CD4-positive, alpha-beta T cell (primary cell): ENCODE measurements at regions of chr16 and their contacts with region 1.

Region 1: DNA sequence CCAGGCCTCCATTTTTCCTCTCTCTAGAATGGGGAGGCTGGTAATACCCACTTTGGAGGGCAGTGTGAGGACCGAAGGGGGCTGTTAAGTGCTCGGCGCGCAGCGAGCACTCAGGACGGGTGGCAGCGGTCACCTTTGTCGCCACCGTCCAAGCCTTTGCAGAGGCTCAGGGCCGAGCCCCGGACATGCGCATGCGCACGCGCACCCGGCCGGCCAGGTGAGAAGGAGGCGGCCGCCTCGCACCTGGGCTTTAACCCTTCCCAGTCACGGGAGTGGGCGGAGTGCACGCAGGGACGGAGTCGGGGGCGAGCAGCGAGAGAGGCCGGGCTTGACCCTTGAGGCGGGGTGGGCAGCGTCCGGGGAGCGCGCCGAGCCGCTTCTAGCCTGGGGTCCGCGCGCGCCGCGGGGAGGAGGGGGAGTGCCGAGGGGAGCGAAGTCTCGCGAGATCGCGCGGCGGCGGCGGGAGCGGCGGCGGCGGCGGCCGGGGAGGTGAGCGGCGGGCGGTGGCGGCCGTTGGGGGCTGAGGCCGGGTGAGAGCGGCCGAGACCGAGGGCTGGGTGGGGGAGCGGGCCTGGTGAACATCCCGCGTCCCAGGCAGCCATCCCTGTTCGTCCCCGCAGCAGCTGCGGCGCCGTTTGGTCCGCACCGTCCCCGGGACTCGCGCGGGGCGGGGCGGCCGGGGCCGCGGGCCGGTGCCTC is at the start of gene MRTFB:
- DNase-seq: peak; percentile 63 to 90 (median 76)
- ATAC-seq: peak; percentile 90
- H3K4me3 ChIP-seq: peak within 1 kb of the TSS; percentile 84
- H3K4me3 Mint-ChIP-seq: peak within 1 kb of the TSS; percentile 93
- H3K27ac ChIP-seq: peak within 1 kb of the TSS in 1 of 2 donors; percentile 69
- H3K27ac Mint-ChIP-seq: peak within 1 kb of the TSS; percentile 82
- H3K4me1 ChIP-seq: peaks cover 17% of the 10 kb centered on the region
- H3K4me1 Mint-ChIP-seq: peaks cover 39% of the 10 kb centered on the region
- H3K27me3 ChIP-seq: peaks cover 0 to 3% of the 10 kb centered on the region in 2 experiments
- H3K27me3 Mint-ChIP-seq: no peaks in the 10 kb centered on the region
- CTCF ChIP-seq: no peak
- total RNA-seq, gene MRTFB: 18.0 to 19.4 TPM

Region 2: DNA sequence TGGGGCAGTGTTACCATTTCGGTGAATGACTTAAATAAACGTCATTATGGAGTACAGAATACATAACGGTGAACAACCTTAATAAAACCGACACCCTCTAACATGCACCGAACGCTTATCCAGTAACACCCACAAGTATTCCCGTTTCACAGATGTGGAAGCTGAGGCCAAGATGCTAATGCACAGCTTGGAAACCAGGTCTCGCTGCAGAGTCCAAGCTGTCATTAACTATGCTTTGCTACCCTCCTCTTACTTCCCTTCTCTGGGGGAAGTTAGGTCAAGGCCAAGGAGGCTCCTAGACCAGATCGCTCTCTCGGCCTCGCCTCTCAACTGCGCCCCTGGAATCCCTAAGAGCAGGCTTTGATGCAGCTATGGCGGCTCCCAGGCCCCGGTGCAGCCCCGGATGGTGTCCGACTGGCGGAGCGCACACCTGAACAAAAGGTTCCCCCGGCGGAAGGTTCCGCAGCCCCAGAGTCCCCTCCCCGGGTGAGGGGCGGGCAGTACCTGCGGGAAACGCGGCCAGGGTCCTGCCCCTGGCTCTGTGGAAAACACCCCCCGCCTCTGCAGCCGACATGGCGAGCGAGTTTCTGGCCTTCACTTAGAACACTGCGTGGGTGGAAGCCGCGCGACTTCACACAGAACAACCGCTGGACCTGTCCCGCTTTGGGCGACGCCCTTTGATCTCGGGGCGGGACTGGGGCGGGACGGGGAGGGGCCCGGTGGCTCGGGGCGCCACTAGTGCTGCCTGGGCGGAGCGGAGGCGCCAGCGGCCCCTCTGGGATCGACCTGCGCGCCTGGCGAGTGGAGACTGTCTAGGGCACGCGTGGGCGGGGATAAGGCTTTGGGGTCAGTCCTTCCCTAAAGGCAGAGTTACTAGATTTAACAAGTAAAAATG is 1267.6 kb before region 1 on chr16 and contains the start of gene CPPED1:
- CTCF ChIA-PET with region 1: no interaction called
- POLR2A ChIA-PET with region 1: no interaction called
- intact Hi-C with region 1: loop called in 1 of 2 experiments (anchors 10 kb)
- DNase-seq: peak; percentile 82 to 95 (median 88)
- ATAC-seq: peak; percentile 95
- H3K4me3 ChIP-seq: peak within 1 kb of the TSS; percentile 83
- H3K4me3 Mint-ChIP-seq: peak within 1 kb of the TSS; percentile 93
- H3K27ac ChIP-seq: peak within 1 kb of the TSS; percentile 71 to 80
- H3K27ac Mint-ChIP-seq: peak within 1 kb of the TSS; percentile 87
- H3K4me1 ChIP-seq: peaks cover 17% of the 10 kb centered on the region
- H3K4me1 Mint-ChIP-seq: peaks cover 23% of the 10 kb centered on the region
- H3K27me3 ChIP-seq: no peaks in the 10 kb centered on the region
- H3K27me3 Mint-ChIP-seq: no peaks in the 10 kb centered on the region
- CTCF ChIP-seq: no peak
- total RNA-seq, gene CPPED1: 1.4 to 2.3 TPM

Region 3: DNA sequence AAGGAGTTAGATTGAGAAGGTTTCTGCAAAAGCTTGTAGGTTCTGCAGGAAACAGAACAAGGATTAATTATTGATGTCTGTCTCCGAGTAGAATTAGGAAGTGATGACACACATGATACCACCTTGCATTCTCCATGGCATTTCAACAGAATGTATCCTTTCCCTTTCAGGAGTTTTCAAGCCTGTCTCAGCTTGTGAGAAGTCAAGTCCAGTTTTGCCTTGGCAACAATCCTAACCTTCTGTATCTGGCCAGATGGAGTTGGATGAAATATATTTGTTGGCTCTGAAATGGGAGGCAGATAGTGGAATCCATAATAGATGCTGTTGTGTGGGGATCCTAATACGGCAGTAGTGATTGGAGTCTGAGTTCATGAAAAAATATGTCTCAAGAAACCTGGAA is 934.1 kb before region 1 on chr16:
- CTCF ChIA-PET with region 1: no interaction called
- POLR2A ChIA-PET with region 1: no interaction called
- intact Hi-C with region 1: no loop called
- DNase-seq: no peak
- ATAC-seq: no peak
- H3K4me3 ChIP-seq: no peak overlapping the region
- H3K4me3 Mint-ChIP-seq: no peak overlapping the region
- H3K27ac ChIP-seq: no peak overlapping the region
- H3K27ac Mint-ChIP-seq: no peak overlapping the region
- H3K4me1 ChIP-seq: no peaks in the 10 kb centered on the region
- H3K4me1 Mint-ChIP-seq: no peaks in the 10 kb centered on the region
- H3K27me3 ChIP-seq: no peaks in the 10 kb centered on the region
- H3K27me3 Mint-ChIP-seq: peaks cover 3% of the 10 kb centered on the region
- CTCF ChIP-seq: no peak

Region 4: GRCh38 chr16:14632692-14633569 is 561.9 kb after region 1 on chr16 and contains the start of gene BFAR:
- CTCF ChIA-PET with region 1: no interaction called
- POLR2A ChIA-PET with region 1: no interaction called
- intact Hi-C with region 1: loop called in 1 of 2 experiments (anchors 5 kb)
- DNase-seq: peak; percentile 98 to 100 (median 99)
- ATAC-seq: peak; percentile 70
- H3K4me3 ChIP-seq: peak within 1 kb of the TSS; percentile 98
- H3K4me3 Mint-ChIP-seq: peak within 1 kb of the TSS; percentile 100
- H3K27ac ChIP-seq: peak within 1 kb of the TSS; percentile 82 to 92
- H3K27ac Mint-ChIP-seq: peak within 1 kb of the TSS; percentile 93
- H3K4me1 ChIP-seq: peaks cover 65% of the 10 kb centered on the region
- H3K4me1 Mint-ChIP-seq: peaks cover 64% of the 10 kb centered on the region
- H3K27me3 ChIP-seq: no peaks in the 10 kb centered on the region
- H3K27me3 Mint-ChIP-seq: no peaks in the 10 kb centered on the region
- CTCF ChIP-seq: no peak
- total RNA-seq, gene BFAR: 36.9 to 37.6 TPM